Panc1 (cell line): ENCODE measurements at regions of chr4 and their contacts with region 1.

Region 1: DNA sequence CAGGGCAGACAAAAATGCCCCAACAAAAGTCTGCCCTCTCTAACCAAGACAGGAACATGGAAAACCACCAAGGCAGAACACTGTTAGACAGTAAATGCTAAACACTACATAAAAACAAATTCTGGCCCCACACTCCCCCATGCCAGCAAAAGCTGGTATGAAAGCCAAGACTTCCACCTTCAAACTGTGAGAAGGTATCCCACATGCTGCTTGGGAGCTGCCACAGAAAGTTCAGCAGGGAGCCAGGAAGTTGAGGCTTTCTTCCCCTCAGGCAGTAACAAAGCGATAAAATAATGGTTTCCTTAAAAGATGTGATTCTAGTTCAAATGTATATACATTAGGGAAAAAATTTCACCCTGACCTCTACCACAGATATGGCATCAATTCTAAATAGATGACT is 770.4 kb upstream of the NDST4 start:
- DNase-seq: no peak
- ATAC-seq: no peak
- H3K4me3 ChIP-seq: no peak overlapping the region
- H3K27ac ChIP-seq: no peak overlapping the region
- H3K4me1 ChIP-seq: no peaks in the 10 kb centered on the region
- H3K27me3 ChIP-seq: no peaks in the 10 kb centered on the region
- CTCF ChIP-seq: no peak

Region 2: GRCh38 chr4:115664285-115664684 is 219.6 kb before region 1 on chr4:
- CTCF ChIA-PET with region 1: no interaction called
- POLR2A ChIA-PET with region 1: interaction called, 10 read pairs
- in situ Hi-C with region 1: no loop called
- intact Hi-C with region 1: no loop called
- DNase-seq: no peak
- ATAC-seq: no peak
- H3K4me3 ChIP-seq: no peak overlapping the region
- H3K27ac ChIP-seq: no peak overlapping the region
- H3K4me1 ChIP-seq: no peaks in the 10 kb centered on the region
- H3K27me3 ChIP-seq: no peaks in the 10 kb centered on the region
- CTCF ChIP-seq: no peak